Activated CD4-positive, alpha-beta T cell treated with anti-CD3 and anti-CD28 coated beads, Interleukin-2, amount 10 ng/mL, durations not matched to agents 24 days and 14 days (primary cell): ENCODE measurements at regions of chr12 and their contacts with region 1.

Region 1: DNA sequence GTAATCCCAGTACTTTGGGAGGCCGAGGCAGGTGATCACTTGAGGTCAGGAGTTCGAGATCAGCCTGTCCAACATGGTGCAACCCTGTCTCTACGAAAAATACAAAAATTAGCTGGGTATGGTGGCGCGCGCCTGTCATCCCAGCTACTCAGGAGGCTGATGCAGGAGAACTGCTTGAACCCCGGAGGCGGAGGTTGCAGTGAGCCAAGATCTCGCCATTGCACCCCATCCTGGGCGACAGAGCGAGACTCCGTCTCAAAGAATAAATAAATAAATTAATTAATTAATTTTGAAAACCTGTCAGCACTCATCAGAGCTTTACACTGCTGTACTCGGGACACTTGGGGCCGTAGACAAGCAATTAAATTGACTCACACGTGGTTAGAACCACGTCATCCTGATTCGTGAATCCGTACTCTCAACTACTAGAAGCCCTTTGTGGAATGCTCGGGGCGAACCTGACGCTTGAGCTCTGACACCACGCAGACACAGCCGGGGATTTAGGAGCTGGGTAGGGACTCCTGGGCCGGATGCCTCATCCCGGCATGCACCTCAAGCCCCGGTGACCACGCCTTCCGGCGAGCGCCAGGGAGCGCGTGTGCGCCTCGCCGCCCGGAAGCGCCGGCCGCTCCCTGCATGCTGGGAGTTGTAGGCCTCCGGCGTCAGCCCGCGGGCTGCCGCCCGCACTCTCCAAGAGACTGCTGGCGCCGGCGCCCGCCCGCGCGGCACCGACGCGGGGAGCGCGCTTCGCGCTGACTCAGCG is at the start of gene XPOT:
- DNase-seq: peak; percentile 98
- H3K4me3 Mint-ChIP-seq: peak within 1 kb of the TSS; percentile 99
- H3K27ac Mint-ChIP-seq: peak within 1 kb of the TSS; percentile 100
- H3K4me1 Mint-ChIP-seq: peaks cover 28% of the 10 kb centered on the region
- H3K27me3 Mint-ChIP-seq: no peaks in the 10 kb centered on the region
- total RNA-seq, gene XPOT: 158 and 163 TPM in 2 replicates

Region 2: GRCh38 chr12:62603061-62603810 is 1800.7 kb before region 1 on chr12:
- intact Hi-C with region 1: loop called (anchors 10 kb)
- DNase-seq: peak; percentile 94
- H3K4me3 Mint-ChIP-seq: peak overlapping the region; percentile 92
- H3K27ac Mint-ChIP-seq: peak overlapping the region; percentile 99
- H3K4me1 Mint-ChIP-seq: peaks cover 30% of the 10 kb centered on the region
- H3K27me3 Mint-ChIP-seq: no peaks in the 10 kb centered on the region

Region 3: DNA sequence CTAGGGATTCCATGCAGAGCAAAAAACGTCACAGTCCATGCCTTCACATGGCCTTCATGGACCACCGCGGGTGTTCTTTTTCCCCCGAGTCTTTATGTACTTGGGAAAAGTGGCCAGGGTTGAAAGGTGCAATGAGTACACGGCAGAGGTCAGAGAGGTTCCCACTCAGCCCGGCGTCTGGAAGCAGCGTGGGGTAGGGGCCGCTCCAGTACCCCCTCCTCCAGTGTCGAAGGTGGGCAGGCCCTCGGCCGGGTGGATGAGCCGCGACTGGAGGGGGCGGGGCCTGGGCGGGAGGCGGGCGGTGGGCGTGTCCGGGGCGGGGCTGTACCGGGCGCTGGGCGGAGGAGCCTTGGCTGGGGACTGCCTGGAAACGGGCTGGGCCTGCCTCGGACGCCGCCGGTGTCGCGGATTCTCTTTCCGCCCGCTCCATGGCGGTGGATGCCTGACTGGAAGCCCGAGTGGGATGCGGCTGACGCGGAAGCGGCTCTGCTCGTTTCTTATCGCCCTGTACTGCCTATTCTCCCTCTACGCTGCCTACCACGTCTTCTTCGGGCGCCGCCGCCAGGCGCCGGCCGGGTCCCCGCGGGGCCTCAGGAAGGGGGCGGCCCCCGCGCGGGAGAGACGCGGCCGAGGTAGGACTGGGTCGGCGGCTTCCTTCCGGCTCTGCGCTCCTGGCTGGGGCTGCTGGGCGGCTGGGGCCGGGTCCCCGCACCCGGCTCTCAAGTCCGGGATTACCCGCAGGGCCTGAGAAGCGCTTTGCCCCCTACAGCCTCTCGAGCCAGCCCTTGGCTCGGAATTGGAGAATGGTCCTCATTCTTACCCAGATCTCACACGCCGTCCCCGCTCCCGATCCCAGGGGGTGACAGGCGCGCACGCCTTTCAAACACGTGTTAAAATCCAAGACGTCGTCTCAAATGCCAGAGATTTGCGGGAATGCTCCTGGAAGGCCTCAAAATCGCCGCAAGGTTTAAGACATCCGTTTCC is 624.1 kb before region 1 on chr12 and contains the start of gene RXYLT1:
- intact Hi-C with region 1: loop called (anchors 1 kb)
- DNase-seq: peak; percentile 93
- H3K4me3 Mint-ChIP-seq: peak within 1 kb of the TSS; percentile 95
- H3K27ac Mint-ChIP-seq: peak within 1 kb of the TSS; percentile 94
- H3K4me1 Mint-ChIP-seq: peaks cover 19% of the 10 kb centered on the region
- H3K27me3 Mint-ChIP-seq: peaks cover 6% of the 10 kb centered on the region
- total RNA-seq, gene RXYLT1: 26.6 and 27.6 TPM in 2 replicates

Region 4: DNA sequence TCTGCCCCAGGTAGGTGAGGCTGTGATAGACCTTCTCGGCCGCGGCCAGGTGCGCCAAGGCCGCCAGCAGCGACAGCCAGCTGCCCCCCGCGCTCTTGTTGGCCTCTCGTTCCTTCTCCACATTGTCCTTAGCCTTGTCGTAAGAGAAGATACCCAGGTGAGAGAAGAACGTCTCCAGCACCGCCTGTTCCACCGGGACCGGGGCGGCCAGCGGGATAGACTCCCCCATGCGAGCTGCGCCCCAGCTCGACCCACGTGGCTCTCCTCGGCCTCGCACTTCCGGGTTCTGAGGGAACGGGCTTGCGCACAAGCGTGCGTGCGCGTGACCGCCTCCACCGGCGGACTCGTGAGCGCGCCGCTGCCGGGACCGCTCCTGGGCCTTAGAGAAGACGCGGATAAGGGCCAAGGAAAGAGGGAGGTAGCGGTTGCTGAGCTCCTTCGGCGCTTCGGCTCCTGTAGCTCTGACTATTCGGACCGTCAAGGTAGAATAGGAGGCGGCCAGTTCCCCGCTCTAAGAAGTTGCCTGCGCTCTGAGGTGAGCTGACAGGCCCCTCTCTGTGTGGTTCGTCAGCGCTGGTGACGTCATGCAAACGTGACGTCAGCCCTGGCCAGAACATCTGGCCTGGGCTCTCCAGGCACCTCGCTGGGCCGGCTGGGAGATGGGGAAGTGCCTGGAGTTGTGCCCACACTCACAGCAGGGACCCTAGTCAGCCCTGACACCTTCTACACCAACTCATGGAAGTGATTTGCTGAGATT is 181.7 kb before region 1 on chr12 and contains the start of gene KICS2:
- intact Hi-C with region 1: loop called (anchors 1 kb)
- DNase-seq: peak; percentile 97
- H3K4me3 Mint-ChIP-seq: peak within 1 kb of the TSS; percentile 90
- H3K27ac Mint-ChIP-seq: peak within 1 kb of the TSS; percentile 97
- H3K4me1 Mint-ChIP-seq: peaks cover 22% of the 10 kb centered on the region
- H3K27me3 Mint-ChIP-seq: peaks cover 18% of the 10 kb centered on the region
- total RNA-seq, gene KICS2: 12.8 and 17.1 TPM in 2 replicates

Region 5: DNA sequence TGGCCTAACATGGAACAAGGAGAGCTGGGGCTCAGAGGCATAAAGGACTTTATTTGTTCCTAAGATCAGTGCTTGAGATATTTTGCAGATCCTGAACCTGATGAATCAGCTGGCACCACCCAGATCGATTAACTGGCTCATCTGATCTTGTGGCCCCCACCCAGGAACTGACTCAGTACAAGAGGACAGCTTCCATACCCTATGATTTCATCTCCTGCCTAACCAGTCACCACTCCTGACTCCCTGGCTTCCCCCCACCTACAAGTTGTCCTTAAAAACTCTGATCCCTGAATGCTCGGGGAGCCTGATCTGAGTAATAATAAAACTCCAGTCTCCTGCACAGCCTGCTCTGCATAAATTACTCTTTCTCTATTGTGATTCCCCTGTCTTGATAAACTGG is 18.4 kb before region 1 on chr12:
- intact Hi-C with region 1: loop called (anchors 2 kb)
- DNase-seq: peak; percentile 75
- H3K4me3 Mint-ChIP-seq: peak overlapping the region; percentile 66
- H3K27ac Mint-ChIP-seq: peak overlapping the region; percentile 90
- H3K4me1 Mint-ChIP-seq: peaks cover 25% of the 10 kb centered on the region
- H3K27me3 Mint-ChIP-seq: peaks cover 6% of the 10 kb centered on the region

Region 6: GRCh38 chr12:64451687-64452558 is 48.0 kb after region 1 on chr12 and contains the start of gene TBK1:
- intact Hi-C with region 1: loop called (anchors 1 kb)
- DNase-seq: peak; percentile 93
- H3K4me3 Mint-ChIP-seq: peak within 1 kb of the TSS; percentile 98
- H3K27ac Mint-ChIP-seq: peak within 1 kb of the TSS; percentile 98
- H3K4me1 Mint-ChIP-seq: peaks cover 36% of the 10 kb centered on the region
- H3K27me3 Mint-ChIP-seq: no peaks in the 10 kb centered on the region
- total RNA-seq, gene TBK1: 32.9 and 34.6 TPM in 2 replicates

Region 7: DNA sequence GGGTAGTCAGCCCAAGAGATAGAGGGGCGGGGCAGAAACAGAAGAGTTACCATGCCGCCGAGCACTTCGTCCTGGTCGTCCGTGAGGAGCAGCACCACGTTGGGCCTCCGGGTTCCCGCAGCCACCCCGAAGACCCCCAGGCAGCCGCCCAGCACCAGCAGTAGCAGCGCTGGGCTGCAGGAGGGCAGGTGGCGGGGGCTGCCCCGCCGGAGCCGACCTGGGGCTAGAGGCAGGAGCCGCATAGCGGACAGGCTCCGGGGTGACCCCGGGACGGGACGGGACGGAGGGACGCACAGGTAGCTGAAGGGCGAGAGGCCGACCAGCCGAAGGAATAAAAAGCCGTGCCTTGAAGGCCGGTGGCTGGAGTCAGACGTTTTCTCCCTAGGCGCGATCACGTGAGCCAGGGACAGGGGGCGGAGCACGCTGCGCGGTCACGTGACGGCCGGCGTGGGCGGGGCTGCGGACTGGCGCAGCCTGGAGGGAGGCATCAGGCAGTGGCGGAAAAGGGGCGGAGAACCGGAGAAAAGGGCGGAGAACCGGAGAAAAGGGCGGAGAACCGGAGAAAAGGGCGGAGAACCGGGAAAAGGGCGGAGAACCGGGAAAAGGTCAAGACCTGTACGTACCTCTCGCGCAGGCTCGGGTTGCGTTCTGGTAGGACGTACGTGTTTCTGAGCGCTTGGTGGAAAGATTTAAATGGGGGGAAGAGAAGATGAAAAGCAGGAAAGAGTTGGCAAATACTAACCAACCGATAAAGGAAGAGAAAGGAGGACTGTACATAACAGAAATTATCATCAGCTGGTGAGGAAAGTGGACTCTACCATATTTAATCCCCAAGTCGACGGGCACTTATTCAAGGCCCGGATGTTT is 355.4 kb after region 1 on chr12 and contains the start of gene GNS:
- intact Hi-C with region 1: loop called (anchors 2 kb)
- DNase-seq: peak; percentile 100
- H3K4me3 Mint-ChIP-seq: peak within 1 kb of the TSS; percentile 90
- H3K27ac Mint-ChIP-seq: peak within 1 kb of the TSS; percentile 92
- H3K4me1 Mint-ChIP-seq: peaks cover 37% of the 10 kb centered on the region
- H3K27me3 Mint-ChIP-seq: peaks cover 6% of the 10 kb centered on the region
- total RNA-seq, gene GNS: 19.9 and 20.5 TPM in 2 replicates